Heart right ventricle (tissue), 16 donors: ENCODE measurements at regions of chr2 and their contacts with region 1.

Region 1: GRCh38 chr2:11829947-11830707 is 83.7 kb downstream of the LPIN1 start:
- DNase-seq: peak; percentile 51 to 69
- ATAC-seq: peak; percentile 78 to 93 (median 89)
- H3K4me3 ChIP-seq: peak overlapping the region in 7 of 10 donors; percentile 25 to 45 (median 29)
- H3K27ac ChIP-seq: peak overlapping the region; percentile 21 to 90 (median 75)
- H3K4me1 ChIP-seq: peaks cover 8 to 47% (median 29%) of the 10 kb centered on the region in 9 donors
- H3K27me3 ChIP-seq: no peaks in the 10 kb centered on the region
- CTCF ChIP-seq: peak in 6 of 9 donors; percentile 20 to 58 (median 44)

Region 2: GRCh38 chr2:12948961-12949353 is 1118.8 kb after region 1 on chr2:
- intact Hi-C with region 1: loop called in 1 of 10 experiments (anchors 10 kb)
- DNase-seq: no peak
- ATAC-seq: no peak
- H3K4me3 ChIP-seq: no peak overlapping the region
- H3K27ac ChIP-seq: peak overlapping the region in 1 of 10 donors; percentile 12
- H3K4me1 ChIP-seq: peaks cover 0 to 5% (median 0%) of the 10 kb centered on the region in 9 donors
- H3K27me3 ChIP-seq: peaks cover 0 to 4% (median 0%) of the 10 kb centered on the region in 7 donors
- CTCF ChIP-seq: no peak